ENCODE measurements at regions of chr3 and their contacts with region 1.

Region 1: GRCh38 chr3:186806089-186807055 is at the start of gene RFC4:
- DNase-seq: peak; percentile 81 to 88 (median 83)
- H3K4me3 ChIP-seq: peak within 1 kb of the TSS; percentile 90 to 98
- H3K4me3 Mint-ChIP-seq: peak within 1 kb of the TSS; percentile 93 to 98 (median 96)
- H3K27ac ChIP-seq: peak within 1 kb of the TSS; percentile 93
- H3K27ac Mint-ChIP-seq: peak within 1 kb of the TSS; percentile 89 to 97 (median 95)
- H3K4me1 ChIP-seq: peaks cover 18% of the 10 kb centered on the region
- H3K4me1 Mint-ChIP-seq: peaks cover 11 to 33% (median 17%) of the 10 kb centered on the region in 4 donors
- H3K27me3 ChIP-seq: no peaks in the 10 kb centered on the region
- H3K27me3 Mint-ChIP-seq: no peaks in the 10 kb centered on the region
- total RNA-seq, gene RFC4: 21.5 to 24.6 TPM

Region 2: DNA sequence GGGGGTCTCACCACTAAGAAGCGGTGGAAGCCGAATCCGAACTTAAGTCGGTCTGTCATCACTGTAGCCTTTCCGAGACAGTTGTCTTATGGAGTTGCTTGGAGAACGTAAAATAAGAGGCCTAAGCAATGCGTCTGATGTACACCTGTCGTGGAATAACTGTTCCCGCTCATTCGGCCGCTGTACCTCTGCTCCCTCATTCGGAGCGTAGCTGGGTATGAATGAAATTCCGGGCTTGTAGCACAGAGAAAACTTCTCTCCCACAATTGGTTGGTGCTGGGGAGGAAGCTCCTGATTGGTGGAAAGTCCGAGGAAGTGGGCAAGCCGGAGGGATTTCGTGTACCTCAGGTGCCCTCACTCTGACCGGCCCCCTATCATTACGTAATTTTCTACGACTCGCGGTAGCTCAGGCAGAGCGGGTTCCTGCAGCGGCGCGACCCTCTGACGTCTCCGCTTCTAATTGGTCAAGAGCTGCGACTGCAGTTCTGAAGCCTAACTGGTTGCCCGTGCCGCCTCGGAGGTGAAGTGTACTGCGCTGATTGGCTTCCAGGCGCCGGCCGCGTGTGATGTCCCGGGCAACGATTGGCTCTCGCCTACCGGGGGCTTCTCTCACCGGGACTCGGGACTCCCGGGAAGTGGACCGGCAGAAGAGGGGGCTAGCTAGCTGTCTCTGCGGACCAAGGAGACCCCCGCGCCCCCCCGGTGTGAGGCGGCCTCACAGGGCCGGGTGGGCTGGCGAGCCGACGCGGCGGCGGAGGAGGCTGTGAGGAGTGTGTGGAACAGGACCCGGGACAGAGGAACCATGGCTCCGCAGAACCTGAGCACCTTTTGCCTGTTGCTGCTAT is 236.1 kb before region 1 on chr3 and contains the start of gene DNAJB11:
- CTCF ChIA-PET with region 1: no interaction called
- POLR2A ChIA-PET with region 1: interaction called, 3 read pairs
- intact Hi-C with region 1: loop called (anchors 1 kb)
- DNase-seq: peak; percentile 96 to 100 (median 99)
- H3K4me3 ChIP-seq: peak within 1 kb of the TSS; percentile 71 to 93
- H3K4me3 Mint-ChIP-seq: peak within 1 kb of the TSS; percentile 89 to 100 (median 94)
- H3K27ac ChIP-seq: peak within 1 kb of the TSS; percentile 91
- H3K27ac Mint-ChIP-seq: peak within 1 kb of the TSS; percentile 95 to 99 (median 98)
- H3K4me1 ChIP-seq: peaks cover 37% of the 10 kb centered on the region
- H3K4me1 Mint-ChIP-seq: peaks cover 30 to 71% (median 45%) of the 10 kb centered on the region in 4 donors
- H3K27me3 ChIP-seq: no peaks in the 10 kb centered on the region
- H3K27me3 Mint-ChIP-seq: no peaks in the 10 kb centered on the region
- total RNA-seq, gene DNAJB11: 34.0 to 38.6 TPM

Region 3: GRCh38 chr3:186772701-186773424 is 33.5 kb before region 1 on chr3:
- CTCF ChIA-PET with region 1: interaction called, 3 read pairs
- POLR2A ChIA-PET with region 1: interaction called, 7 read pairs
- intact Hi-C with region 1: loop called (anchors 5 kb)
- DNase-seq: peak; percentile 46 to 63 (median 49)
- H3K4me3 ChIP-seq: peak overlapping the region; percentile 37 to 72
- H3K4me3 Mint-ChIP-seq: peak overlapping the region; percentile 88 to 99 (median 96)
- H3K27ac ChIP-seq: peak overlapping the region; percentile 61
- H3K27ac Mint-ChIP-seq: peak overlapping the region; percentile 81 to 95 (median 95)
- H3K4me1 ChIP-seq: peaks cover 12% of the 10 kb centered on the region
- H3K4me1 Mint-ChIP-seq: peaks cover 0 to 18% (median 13%) of the 10 kb centered on the region in 4 donors
- H3K27me3 ChIP-seq: no peaks in the 10 kb centered on the region
- H3K27me3 Mint-ChIP-seq: no peaks in the 10 kb centered on the region

Region 4: DNA sequence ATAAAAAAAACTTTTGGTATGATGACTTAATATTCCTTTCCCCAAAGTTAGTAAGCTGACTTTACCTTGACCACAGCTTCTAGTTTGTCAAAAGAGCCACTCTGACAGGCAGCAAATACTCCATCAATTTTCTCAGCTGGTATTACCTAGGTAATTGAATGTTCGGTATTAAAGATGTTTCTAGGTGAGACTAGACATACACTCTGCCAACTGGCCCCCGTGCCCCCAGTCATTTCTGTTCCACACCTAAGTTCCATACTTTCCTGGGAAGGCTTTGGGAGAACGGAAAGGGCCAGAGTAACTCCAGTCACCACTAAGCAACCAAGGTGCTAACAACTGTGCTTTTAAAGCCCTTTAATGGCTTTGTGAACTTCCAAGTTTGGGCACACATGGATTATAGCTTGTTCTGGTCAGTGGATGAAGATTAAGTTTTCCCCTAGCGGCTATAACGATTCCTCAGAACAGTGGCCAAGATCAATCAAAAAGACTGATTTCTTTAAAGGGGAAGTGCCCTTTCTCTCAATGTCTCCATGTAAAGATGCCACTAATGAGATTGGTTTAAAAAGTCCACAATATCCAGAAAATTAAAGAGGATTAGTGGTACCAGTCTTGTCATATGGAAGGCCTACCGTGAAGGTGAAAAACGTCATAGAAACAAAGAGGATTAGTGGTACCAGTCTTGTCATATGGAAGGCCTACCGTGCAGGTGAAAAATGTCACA is 16.0 kb before region 1 on chr3:
- CTCF ChIA-PET with region 1: no interaction called
- POLR2A ChIA-PET with region 1: interaction called, 160 read pairs
- intact Hi-C with region 1: no loop called
- DNase-seq: peak in 2 of 5 donors; percentile 8 to 23
- H3K4me3 ChIP-seq: no peak overlapping the region
- H3K4me3 Mint-ChIP-seq: no peak overlapping the region
- H3K27ac ChIP-seq: no peak overlapping the region
- H3K27ac Mint-ChIP-seq: peak overlapping the region; percentile 33 to 97 (median 72)
- H3K4me1 ChIP-seq: peaks cover 43% of the 10 kb centered on the region
- H3K4me1 Mint-ChIP-seq: peaks cover 35 to 45% (median 42%) of the 10 kb centered on the region in 4 donors
- H3K27me3 ChIP-seq: no peaks in the 10 kb centered on the region
- H3K27me3 Mint-ChIP-seq: no peaks in the 10 kb centered on the region

Region 5: DNA sequence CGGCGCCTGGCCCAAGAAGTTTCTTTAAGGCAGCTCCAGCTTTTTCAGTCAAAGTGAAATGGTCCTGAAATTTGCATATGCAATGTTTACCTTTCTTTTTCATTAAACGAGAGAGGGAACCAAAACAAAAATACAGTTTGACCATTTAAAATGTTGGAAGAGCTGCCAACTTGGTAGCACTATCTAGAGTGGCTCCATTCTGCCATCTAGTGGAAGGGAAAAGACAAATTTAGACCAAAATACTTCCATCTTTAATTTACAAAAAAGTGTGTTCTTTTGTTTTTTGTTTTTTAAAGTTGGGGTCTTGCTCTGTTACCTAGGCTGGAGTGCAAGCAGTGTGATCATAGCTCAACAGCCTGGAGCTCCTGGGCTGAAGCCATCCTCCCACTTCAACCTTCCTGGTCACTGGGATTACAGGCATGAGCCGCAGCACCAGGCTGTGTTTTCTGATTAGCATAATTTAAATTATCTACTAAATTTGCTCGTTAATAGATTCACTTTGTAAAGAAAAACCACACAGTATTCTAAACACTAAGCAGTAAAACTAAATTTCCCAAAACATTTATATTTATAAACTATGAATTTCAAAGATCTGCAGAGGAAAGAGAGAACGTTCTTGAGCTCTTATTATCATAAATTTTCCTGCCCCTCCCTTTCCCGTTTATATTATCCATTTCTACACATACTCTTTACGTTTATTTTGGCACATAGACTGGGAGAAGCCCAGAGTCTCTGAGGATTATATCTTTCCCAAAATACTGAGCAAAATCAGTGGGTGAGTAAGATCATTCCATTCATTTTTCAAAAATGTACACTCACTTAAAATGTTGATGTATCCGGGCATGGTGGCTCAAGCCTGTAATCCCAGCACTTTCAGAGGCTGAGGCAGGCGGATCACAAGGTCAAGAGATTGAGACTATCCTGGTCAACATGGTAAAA is 15.3 kb after region 1 on chr3:
- CTCF ChIA-PET with region 1: interaction called, 14 read pairs
- POLR2A ChIA-PET with region 1: interaction called, 16 read pairs
- intact Hi-C with region 1: no loop called
- DNase-seq: peak in 4 of 5 donors; percentile 42 to 56 (median 46)
- H3K4me3 ChIP-seq: no peak overlapping the region
- H3K4me3 Mint-ChIP-seq: no peak overlapping the region
- H3K27ac ChIP-seq: no peak overlapping the region
- H3K27ac Mint-ChIP-seq: peak overlapping the region in 1 of 7 donors; percentile 4
- H3K4me1 ChIP-seq: peaks cover 13% of the 10 kb centered on the region
- H3K4me1 Mint-ChIP-seq: peaks cover 5 to 15% (median 11%) of the 10 kb centered on the region in 4 donors
- H3K27me3 ChIP-seq: no peaks in the 10 kb centered on the region
- H3K27me3 Mint-ChIP-seq: peaks cover 3 to 8% of the 10 kb centered on the region in 2 donors

Region 6: GRCh38 chr3:186826976-186827731 is 20.8 kb after region 1 on chr3:
- CTCF ChIA-PET with region 1: interaction called, 14 read pairs
- POLR2A ChIA-PET with region 1: interaction called, 16 read pairs
- intact Hi-C with region 1: loop called (anchors 1 kb)
- DNase-seq: peak; percentile 81 to 89 (median 87)
- H3K4me3 ChIP-seq: peak overlapping the region in 1 of 2 donors; percentile 65
- H3K4me3 Mint-ChIP-seq: peak overlapping the region; percentile 65 to 93 (median 78)
- H3K27ac ChIP-seq: peak overlapping the region; percentile 47
- H3K27ac Mint-ChIP-seq: peak overlapping the region in 2 of 7 donors; percentile 18 to 28
- H3K4me1 ChIP-seq: peaks cover 25% of the 10 kb centered on the region
- H3K4me1 Mint-ChIP-seq: peaks cover 5 to 16% (median 12%) of the 10 kb centered on the region in 4 donors
- H3K27me3 ChIP-seq: peaks cover 21% of the 10 kb centered on the region
- H3K27me3 Mint-ChIP-seq: peaks cover 30 to 38% of the 10 kb centered on the region in 2 donors

Region 7: GRCh38 chr3:186882150-186882524 is 75.8 kb after region 1 on chr3:
- CTCF ChIA-PET with region 1: no interaction called
- POLR2A ChIA-PET with region 1: no interaction called
- intact Hi-C with region 1: no loop called
- DNase-seq: no peak
- H3K4me3 ChIP-seq: no peak overlapping the region
- H3K4me3 Mint-ChIP-seq: peak overlapping the region in 7 of 8 donors; percentile 21 to 84 (median 54)
- H3K27ac ChIP-seq: no peak overlapping the region
- H3K27ac Mint-ChIP-seq: peak overlapping the region in 4 of 7 donors; percentile 2 to 82 (median 60)
- H3K4me1 ChIP-seq: peaks cover 45% of the 10 kb centered on the region
- H3K4me1 Mint-ChIP-seq: peaks cover 30 to 55% (median 40%) of the 10 kb centered on the region in 4 donors
- H3K27me3 ChIP-seq: no peaks in the 10 kb centered on the region
- H3K27me3 Mint-ChIP-seq: no peaks in the 10 kb centered on the region